ENCODE measurements at regions of chr5 and their contacts with region 1.

Region 1: DNA sequence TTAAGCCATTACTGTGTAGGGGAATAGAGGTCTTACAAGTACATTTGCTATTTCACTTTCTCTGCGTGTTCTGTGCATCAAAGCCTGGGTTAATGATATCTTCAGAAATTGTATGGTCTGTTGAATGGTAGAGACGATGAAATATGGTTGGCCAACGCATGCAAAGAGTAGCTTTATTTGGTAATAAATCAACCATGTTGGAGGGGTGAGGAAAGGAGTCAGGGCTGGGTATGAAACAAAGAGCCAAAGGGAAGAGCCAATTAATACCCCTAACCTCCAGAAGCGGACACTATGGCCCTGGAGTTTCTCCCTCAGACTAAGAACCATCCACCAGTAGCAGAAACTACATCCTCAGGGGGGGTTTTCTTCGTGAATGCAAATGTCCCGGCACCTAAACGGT is 1974.0 kb upstream of the WWC1 start:
- DNase-seq: no peak
- CTCF ChIP-seq: no peak

Region 2: DNA sequence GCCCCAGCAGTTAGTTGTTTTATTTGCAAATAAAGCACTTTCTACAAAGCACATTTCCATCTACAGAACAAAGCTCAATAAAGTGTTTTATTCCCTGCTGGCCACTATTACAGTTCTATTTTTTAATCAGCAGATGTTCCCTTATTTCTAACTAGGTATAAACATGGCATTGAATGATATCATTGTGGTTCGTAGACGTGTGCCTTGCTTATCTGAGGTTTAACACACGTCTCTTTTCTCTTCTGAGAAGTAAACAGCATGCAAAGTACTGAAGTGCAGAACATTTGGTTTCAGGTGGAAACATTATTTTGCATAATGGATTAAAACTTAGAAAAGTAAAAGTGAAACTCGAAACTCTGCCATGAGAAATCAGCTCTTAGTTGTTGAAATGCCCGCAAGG is 15.3 kb before region 1 on chr5:
- CTCF ChIA-PET with region 1: interaction called, 10 read pairs
- POLR2A ChIA-PET with region 1: no interaction called
- DNase-seq: no peak
- CTCF ChIP-seq: no peak

Region 3: DNA sequence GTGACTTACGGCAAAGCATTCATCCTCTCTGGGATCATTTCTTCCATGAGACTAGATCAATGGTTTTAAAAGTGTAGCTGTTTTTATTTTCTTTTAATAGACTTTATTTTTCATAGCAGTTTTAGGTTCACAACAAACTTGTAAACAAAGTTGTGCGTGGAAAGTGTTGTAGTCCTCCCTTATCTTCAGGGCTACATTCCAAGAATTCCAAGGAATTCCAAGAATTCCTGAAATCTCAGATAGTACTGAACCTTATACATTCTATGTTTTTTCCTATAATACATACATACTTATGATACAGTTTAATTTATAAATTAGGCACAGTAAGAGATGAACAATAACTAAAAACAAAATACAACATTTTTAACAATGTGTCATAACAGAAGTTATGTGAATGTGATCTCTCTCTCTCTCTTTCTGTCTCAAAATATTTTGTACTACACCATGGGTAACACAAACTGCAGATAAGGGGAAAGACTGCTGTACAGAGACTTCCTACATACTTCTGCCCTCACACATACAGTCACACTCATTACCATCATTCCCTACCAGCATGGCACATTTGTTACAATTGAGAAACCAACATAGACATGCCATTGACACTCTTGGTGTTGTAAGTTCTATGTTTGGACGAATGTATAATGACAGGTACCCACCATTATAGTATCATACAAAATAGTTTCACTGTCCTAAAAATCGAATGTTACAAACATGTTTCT is 40.9 kb after region 1 on chr5:
- CTCF ChIA-PET with region 1: no interaction called
- POLR2A ChIA-PET with region 1: no interaction called
- DNase-seq: no peak
- CTCF ChIP-seq: no peak